Activated CD4-positive, alpha-beta memory T cell treated with anti-CD3 and anti-CD28 coated beads for 36 hours (primary cell): ENCODE measurements at regions of chr1 and their contacts with region 1.

Region 1: GRCh38 chr1:58783993-58784757 is at the start of gene JUN:
- DNase-seq: peak; percentile 99
- H3K4me3 Mint-ChIP-seq: peak within 1 kb of the TSS; percentile 87
- H3K27ac Mint-ChIP-seq: peak within 1 kb of the TSS; percentile 94
- H3K4me1 Mint-ChIP-seq: peaks cover 18% of the 10 kb centered on the region
- H3K27me3 Mint-ChIP-seq: peaks cover 3% of the 10 kb centered on the region
- total RNA-seq, gene JUN: 12.5 to 13.2 TPM

Region 2: DNA sequence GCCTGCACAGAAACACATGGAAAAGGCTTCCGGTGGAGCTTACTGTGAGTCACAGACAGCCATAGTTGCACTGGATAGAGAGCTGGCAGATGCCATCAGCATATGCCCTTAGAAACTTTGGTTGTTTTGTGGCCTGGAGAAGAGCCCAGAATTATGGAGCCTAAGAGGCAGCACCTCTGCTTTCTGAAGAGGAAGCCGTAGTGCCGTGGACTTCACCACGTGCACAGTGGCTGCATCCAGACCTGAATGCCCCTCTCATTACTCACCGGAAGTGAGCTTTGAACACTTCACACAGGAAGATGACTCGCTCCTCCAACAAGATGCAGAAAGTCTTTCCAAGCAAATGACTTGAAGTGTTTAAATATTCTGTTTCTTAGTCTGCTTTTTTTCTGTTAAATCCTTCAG is 28.7 kb before region 1 on chr1:
- CTCF ChIA-PET with region 1: interaction called, 3 read pairs
- POLR2A ChIA-PET with region 1: interaction called, 17 read pairs
- intact Hi-C with region 1: loop called (anchors 1 kb)
- DNase-seq: peak; percentile 80
- H3K4me3 Mint-ChIP-seq: no peak overlapping the region
- H3K27ac Mint-ChIP-seq: peak overlapping the region; percentile 78
- H3K4me1 Mint-ChIP-seq: peaks cover 44% of the 10 kb centered on the region
- H3K27me3 Mint-ChIP-seq: no peaks in the 10 kb centered on the region

Region 3: DNA sequence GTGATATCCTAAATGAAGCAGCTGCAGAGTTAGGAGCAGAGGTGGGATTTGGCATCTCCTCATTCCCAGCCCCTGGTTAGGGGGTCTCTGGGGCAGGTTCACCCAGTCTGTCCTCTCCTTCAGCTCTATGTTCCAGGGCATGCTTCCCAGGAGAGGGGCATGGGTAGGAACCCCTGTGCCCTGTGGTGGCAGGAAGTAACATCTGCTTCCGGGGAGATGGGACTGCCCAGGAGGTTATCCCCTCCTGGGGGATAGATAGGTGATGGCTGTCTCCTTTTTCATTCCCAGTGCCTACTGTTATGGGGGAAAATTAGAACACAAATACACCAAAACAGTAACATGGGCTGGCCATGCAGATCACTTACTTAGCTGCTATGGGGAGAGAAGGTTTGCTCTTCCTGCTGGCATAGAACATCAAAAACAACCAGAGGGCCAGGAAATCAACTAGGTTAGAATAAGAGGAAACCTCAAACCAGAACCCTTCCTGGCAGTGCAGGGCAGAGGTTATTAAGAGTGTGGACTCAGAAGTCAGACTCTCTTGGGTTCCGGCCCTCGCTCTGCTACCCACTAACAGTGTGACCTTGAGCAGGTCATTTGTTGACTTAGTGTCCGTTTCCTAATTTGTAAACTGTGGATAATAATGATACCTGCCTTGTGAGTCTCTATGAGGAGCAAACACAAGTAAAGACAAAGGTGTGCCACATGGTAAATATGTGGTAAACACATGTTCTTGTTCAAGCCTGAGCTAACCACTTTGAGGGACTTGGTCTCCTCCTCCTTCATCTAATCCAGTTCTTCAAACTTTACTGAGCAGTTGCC is 157.5 kb after region 1 on chr1:
- CTCF ChIA-PET with region 1: interaction called, 7 read pairs
- POLR2A ChIA-PET with region 1: interaction called, 4 read pairs
- intact Hi-C with region 1: loop called (anchors 10 kb)
- DNase-seq: peak; percentile 35
- H3K4me3 Mint-ChIP-seq: no peak overlapping the region
- H3K27ac Mint-ChIP-seq: peak overlapping the region; percentile 55
- H3K4me1 Mint-ChIP-seq: peaks cover 56% of the 10 kb centered on the region
- H3K27me3 Mint-ChIP-seq: no peaks in the 10 kb centered on the region

Region 4: GRCh38 chr1:59046730-59047157 is 262.6 kb after region 1 on chr1:
- CTCF ChIA-PET with region 1: no interaction called
- POLR2A ChIA-PET with region 1: no interaction called
- intact Hi-C with region 1: loop called (anchors 1 kb)
- DNase-seq: peak; percentile 64
- H3K4me3 Mint-ChIP-seq: no peak overlapping the region
- H3K27ac Mint-ChIP-seq: peak overlapping the region; percentile 64
- H3K4me1 Mint-ChIP-seq: peaks cover 33% of the 10 kb centered on the region
- H3K27me3 Mint-ChIP-seq: no peaks in the 10 kb centered on the region

Region 5: GRCh38 chr1:59432531-59433439 is 648.6 kb after region 1 on chr1:
- CTCF ChIA-PET with region 1: no interaction called
- POLR2A ChIA-PET with region 1: no interaction called
- intact Hi-C with region 1: loop called (anchors 5 kb)
- DNase-seq: peak; percentile 15
- H3K4me3 Mint-ChIP-seq: no peak overlapping the region
- H3K27ac Mint-ChIP-seq: peak overlapping the region; percentile 19
- H3K4me1 Mint-ChIP-seq: peaks cover 27% of the 10 kb centered on the region
- H3K27me3 Mint-ChIP-seq: no peaks in the 10 kb centered on the region

Region 6: DNA sequence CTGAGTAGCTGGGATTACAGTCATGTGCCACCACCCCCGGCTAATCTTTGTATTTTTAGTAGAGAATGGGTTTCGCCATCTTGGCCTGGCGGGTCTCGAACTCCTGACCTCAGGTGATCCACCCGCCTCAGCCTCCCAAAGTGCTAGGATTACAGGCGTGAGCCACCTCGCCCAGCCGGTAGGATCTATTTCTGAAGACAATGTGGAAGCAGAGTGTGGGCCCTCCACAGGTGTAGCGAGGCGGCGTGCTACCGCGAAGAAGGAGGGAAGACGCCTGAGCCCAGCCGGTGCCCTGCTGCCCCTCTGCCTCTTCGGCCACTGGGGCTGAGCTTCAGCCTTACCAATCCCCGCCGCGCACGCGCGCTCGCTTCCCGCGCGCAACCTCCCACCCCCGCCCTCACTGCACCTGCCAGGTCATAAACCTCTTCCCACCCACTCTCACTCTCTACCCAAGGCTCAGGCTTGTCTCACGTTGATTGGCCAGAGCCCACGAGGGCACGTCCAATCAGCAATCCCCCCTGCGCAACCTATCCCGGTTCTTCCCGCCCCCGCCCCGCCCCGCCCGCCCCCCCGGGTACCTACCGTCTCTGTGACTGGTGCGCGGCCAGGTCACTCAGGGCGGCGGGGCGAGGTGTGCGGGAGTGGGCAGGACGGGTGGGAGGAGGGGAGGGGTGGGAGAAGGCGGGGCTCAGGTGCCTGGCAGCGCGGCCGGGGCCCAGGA is 1030.2 kb after region 1 on chr1:
- CTCF ChIA-PET with region 1: no interaction called
- POLR2A ChIA-PET with region 1: no interaction called
- intact Hi-C with region 1: loop called (anchors 1 kb)
- DNase-seq: peak; percentile 92
- H3K4me3 Mint-ChIP-seq: peak overlapping the region; percentile 80
- H3K27ac Mint-ChIP-seq: peak overlapping the region; percentile 75
- H3K4me1 Mint-ChIP-seq: peaks cover 7% of the 10 kb centered on the region
- H3K27me3 Mint-ChIP-seq: peaks cover 5% of the 10 kb centered on the region